ENCODE measurements at regions of chr7 and their contacts with region 1.

Region 1: DNA sequence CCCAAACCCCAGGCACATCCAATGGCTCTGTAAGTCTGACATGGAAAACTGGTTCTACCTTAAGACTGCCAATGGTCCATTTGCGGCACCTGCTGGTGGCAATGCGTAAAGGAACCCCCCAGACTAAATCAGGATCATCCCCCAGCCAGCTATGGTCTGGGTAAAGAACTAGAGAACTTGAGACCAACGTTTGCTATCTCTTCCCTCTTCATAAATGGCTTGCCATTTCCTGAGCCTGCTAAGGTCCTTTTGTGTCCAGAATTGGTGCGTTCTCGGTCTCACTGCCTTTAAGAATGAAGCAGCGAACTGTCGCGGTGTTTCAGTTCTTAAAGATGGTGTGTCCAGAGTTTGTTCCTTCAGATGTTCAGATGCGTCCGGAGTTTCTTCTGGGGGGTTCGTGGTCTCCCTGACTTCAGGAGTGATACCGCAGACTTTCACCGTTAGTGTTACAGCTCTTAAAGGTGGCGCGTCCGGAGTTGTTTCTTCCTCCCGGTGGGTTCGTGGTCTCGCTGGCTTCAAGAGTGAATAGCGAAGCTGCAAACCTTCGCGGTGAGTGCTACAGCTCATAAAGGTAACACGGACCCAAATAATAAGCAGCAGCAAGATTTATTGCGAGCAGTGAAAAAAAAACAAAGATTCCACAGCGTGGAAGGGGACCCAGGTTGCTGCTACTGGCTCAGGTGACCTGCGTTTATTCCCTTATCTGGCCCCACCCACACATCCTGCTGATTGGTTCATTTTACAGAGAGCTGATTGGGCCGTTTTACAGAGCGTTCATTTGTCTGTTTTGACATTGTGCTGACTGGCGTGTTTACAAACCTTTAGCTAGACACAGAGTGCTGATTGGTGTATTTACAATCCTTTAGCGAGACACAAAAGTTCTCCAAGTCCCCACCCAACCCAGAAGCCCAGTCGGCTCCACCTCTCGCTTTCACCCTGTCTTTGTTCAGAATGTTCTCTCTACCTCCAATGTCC is 95.4 kb downstream of the ELMO1 start:
- DNase-seq: peak; percentile 90
- H3K4me3 Mint-ChIP-seq: peak overlapping the region; percentile 96
- H3K27ac Mint-ChIP-seq: peak overlapping the region; percentile 97
- H3K4me1 Mint-ChIP-seq: peaks cover 88% of the 10 kb centered on the region
- H3K27me3 Mint-ChIP-seq: no peaks in the 10 kb centered on the region

Region 2: DNA sequence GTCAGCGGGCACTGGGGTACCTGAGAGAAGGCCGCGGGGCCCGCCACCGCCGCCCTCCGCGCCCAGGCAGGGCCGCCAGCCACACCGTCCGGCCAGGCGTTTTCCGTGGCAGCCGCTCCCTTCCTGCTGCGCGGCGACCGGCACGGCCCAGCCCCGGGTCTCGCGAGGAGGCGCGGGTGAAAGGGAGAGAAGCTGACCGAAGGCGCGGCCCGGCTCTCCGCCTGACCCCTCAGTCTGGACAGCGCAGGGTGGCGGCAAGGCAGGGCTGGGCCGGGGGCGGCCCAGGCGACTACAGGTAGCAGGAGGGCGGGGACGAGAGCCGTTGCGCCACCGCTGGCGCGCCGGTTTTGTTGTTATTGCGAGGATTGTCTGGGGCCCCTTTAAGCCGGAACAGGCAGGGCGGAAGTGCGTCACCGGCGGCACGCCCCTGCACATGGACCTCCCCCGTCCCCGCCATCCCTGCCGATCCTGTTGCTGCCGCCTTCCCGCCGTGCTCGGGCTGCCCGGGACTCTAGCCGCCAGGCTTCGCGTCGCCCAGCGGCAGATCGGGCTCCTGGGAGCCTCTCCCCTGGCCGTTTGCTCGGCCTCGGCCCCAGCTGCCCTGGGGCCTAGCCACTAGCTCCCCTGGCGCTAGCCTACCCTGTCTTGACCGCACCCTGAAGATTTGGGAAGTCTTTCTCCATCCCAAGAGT is 1658.3 kb before region 1 on chr7 and contains the start of gene HERPUD2:
- CTCF ChIA-PET with region 1: no interaction called
- intact Hi-C with region 1: loop called (anchors 10 kb)
- DNase-seq: peak; percentile 92
- H3K4me3 Mint-ChIP-seq: peak within 1 kb of the TSS; percentile 94
- H3K27ac Mint-ChIP-seq: peak within 1 kb of the TSS; percentile 96
- H3K4me1 Mint-ChIP-seq: peaks cover 35% of the 10 kb centered on the region
- H3K27me3 Mint-ChIP-seq: no peaks in the 10 kb centered on the region
- total RNA-seq, gene HERPUD2: 20.3 to 22.4 TPM

Region 3: GRCh38 chr7:36677769-36678437 is 675.4 kb before region 1 on chr7:
- CTCF ChIA-PET with region 1: no interaction called
- intact Hi-C with region 1: loop called (anchors 5 kb)
- DNase-seq: peak; percentile 79
- H3K4me3 Mint-ChIP-seq: peak overlapping the region; percentile 31
- H3K27ac Mint-ChIP-seq: peak overlapping the region; percentile 57
- H3K4me1 Mint-ChIP-seq: peaks cover 38% of the 10 kb centered on the region
- H3K27me3 Mint-ChIP-seq: peaks cover 2% of the 10 kb centered on the region

Region 4: DNA sequence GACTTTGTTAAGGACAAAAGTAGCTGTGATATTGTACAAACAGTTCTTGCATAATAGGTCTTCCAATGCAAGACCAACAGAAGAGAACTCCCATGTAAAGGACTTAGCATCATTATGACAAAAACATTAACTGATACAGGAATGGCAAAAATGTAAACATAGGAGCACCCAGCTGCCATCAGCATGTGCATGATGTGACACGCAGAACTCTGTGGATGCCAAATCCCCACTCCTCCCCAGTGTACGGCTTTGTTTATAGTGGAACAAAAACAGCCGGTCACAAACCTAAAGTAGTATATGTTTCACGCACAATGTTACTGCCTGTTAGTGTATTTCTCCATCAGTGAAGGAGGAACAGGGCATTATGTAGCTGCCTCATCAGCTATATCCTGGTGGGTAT is 312.9 kb before region 1 on chr7:
- CTCF ChIA-PET with region 1: no interaction called
- intact Hi-C with region 1: no loop called
- DNase-seq: no peak
- H3K4me3 Mint-ChIP-seq: no peak overlapping the region
- H3K27ac Mint-ChIP-seq: no peak overlapping the region
- H3K4me1 Mint-ChIP-seq: peaks cover 4% of the 10 kb centered on the region
- H3K27me3 Mint-ChIP-seq: no peaks in the 10 kb centered on the region

Region 5: DNA sequence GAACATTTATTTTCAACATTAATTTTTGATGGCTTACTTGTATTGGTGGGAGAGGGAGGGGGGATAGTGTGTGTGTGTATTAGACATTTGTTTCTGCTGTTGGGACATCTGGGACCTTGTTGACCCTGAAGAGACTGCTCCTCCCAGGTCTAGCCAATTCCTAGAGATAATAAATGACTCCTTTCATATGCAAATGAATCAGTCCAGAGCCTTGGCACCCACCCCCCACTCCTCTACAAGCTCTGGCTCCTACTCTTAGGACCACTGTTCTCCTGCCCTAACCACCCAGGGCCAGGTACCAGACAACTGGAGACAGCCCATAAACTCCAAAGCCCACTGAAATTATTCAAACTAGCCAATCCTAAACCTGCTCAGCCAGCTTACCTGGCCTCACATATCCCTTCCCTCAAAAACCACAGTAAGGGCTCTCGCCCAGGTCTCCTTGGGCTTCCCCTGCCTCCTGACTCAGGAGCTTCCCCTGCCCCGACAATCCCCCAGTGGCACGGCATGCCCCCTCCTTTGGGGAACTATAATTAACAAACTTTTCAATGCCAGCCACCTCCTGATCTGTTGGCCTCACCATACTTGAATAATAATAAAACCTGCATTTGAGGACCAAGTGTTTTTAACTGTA is 137.9 kb before region 1 on chr7:
- CTCF ChIA-PET with region 1: no interaction called
- intact Hi-C with region 1: no loop called
- DNase-seq: no peak
- H3K4me3 Mint-ChIP-seq: no peak overlapping the region
- H3K27ac Mint-ChIP-seq: peak overlapping the region; percentile 57
- H3K4me1 Mint-ChIP-seq: peaks cover 25% of the 10 kb centered on the region
- H3K27me3 Mint-ChIP-seq: no peaks in the 10 kb centered on the region

Region 6: GRCh38 chr7:37234928-37235327 is 118.3 kb before region 1 on chr7:
- CTCF ChIA-PET with region 1: interaction called, 10 read pairs
- intact Hi-C with region 1: loop called (anchors 1 kb)
- DNase-seq: no peak
- H3K4me3 Mint-ChIP-seq: no peak overlapping the region
- H3K27ac Mint-ChIP-seq: no peak overlapping the region
- H3K4me1 Mint-ChIP-seq: peaks cover 16% of the 10 kb centered on the region
- H3K27me3 Mint-ChIP-seq: no peaks in the 10 kb centered on the region

Region 7: GRCh38 chr7:37277513-37277912 is 75.7 kb before region 1 on chr7:
- CTCF ChIA-PET with region 1: no interaction called
- intact Hi-C with region 1: no loop called
- DNase-seq: no peak
- H3K4me3 Mint-ChIP-seq: no peak overlapping the region
- H3K27ac Mint-ChIP-seq: no peak overlapping the region
- H3K4me1 Mint-ChIP-seq: peaks cover 62% of the 10 kb centered on the region
- H3K27me3 Mint-ChIP-seq: no peaks in the 10 kb centered on the region

Region 8: GRCh38 chr7:37376386-37376785 is 23.1 kb after region 1 on chr7:
- CTCF ChIA-PET with region 1: interaction called, 8 read pairs
- intact Hi-C with region 1: loop called (anchors 1 kb)
- DNase-seq: peak; percentile 69
- H3K4me3 Mint-ChIP-seq: no peak overlapping the region
- H3K27ac Mint-ChIP-seq: peak overlapping the region; percentile 65
- H3K4me1 Mint-ChIP-seq: peaks cover 68% of the 10 kb centered on the region
- H3K27me3 Mint-ChIP-seq: no peaks in the 10 kb centered on the region

Region 9: GRCh38 chr7:37448636-37449361 is 95.5 kb after region 1 on chr7 and contains the start of gene ELMO1:
- CTCF ChIA-PET with region 1: interaction called, 34 read pairs
- intact Hi-C with region 1: loop called (anchors 1 kb)
- DNase-seq: peak; percentile 81
- H3K4me3 Mint-ChIP-seq: peak within 1 kb of the TSS; percentile 94
- H3K27ac Mint-ChIP-seq: peak within 1 kb of the TSS; percentile 95
- H3K4me1 Mint-ChIP-seq: peaks cover 45% of the 10 kb centered on the region
- H3K27me3 Mint-ChIP-seq: no peaks in the 10 kb centered on the region
- total RNA-seq, gene ELMO1: 129 to 137 TPM

Measured in activated naive CD4-positive, alpha-beta T cell treated with anti-CD3 and anti-CD28 coated beads for 36 hours (primary cell).